ENCODE measurements at regions of chr12 and their contacts with region 1.

Region 1: GRCh38 chr12:26028953-26029735 is 70.7 kb downstream of the RASSF8 start:
- DNase-seq: no peak
- H3K4me3 ChIP-seq: no peak overlapping the region
- H3K27ac ChIP-seq: peak overlapping the region in 1 of 4 donors; percentile 19
- H3K4me1 ChIP-seq: peaks cover 0 to 25% (median 0%) of the 10 kb centered on the region in 3 donors
- H3K27me3 ChIP-seq: no peaks in the 10 kb centered on the region
- CTCF ChIP-seq: peak; percentile 23 to 83 (median 69)
- POLR2A ChIP-seq: no peak

Region 2: DNA sequence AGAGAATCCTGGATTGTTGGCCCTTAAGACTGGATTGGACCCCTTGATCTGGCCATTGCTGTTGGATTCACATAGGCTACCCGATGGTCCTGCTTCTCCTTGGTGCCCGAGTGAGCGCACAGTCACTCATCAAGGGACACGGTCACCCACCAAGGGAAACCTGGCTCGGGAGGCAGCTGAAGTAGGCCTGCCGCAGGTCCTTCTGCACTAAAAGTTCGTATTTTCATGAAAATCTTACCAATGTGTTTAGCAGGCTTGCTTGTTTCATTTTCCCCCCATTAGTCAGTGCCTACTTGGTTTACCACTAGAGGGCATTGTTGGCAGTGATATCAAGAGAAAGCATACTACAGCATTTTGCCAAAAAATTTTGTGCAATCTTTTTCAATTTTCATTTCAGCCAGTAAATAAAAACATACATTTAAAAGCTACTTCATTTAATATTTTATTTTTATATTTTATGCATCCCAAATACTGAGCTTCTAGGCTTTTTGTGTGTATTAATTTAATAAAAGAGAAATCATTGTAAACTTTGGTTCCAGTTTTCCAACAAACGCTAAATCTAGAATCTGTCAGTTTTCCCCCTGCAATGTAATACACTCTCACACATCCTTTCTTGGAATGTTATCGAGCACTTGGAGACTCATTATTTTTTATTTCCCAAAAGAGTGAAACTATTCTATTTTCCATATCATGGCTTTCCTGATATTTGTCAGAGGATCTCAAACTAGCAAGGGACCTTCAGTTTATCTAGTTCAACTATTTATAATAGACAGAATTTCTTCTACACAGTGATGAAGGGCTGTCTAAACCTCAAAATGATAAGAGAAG is 592.7 kb before region 1 on chr12:
- intact Hi-C with region 1: loop called (anchors 10 kb)
- DNase-seq: no peak
- H3K4me3 ChIP-seq: peak overlapping the region in 3 of 4 donors; percentile 18 to 48 (median 21)
- H3K27ac ChIP-seq: no peak overlapping the region
- H3K4me1 ChIP-seq: peaks cover 0 to 7% (median 4%) of the 10 kb centered on the region in 3 donors
- H3K27me3 ChIP-seq: no peaks in the 10 kb centered on the region
- CTCF ChIP-seq: peak; percentile 57 to 87 (median 78)
- POLR2A ChIP-seq: no peak

Region 3: GRCh38 chr12:26113853-26114719 is 84.9 kb after region 1 on chr12:
- intact Hi-C with region 1: no loop called
- DNase-seq: peak; percentile 76
- H3K4me3 ChIP-seq: peak overlapping the region; percentile 38 to 73 (median 54)
- H3K27ac ChIP-seq: peak overlapping the region; percentile 84 to 96 (median 92)
- H3K4me1 ChIP-seq: peaks cover 4 to 24% (median 13%) of the 10 kb centered on the region in 3 donors
- H3K27me3 ChIP-seq: no peaks in the 10 kb centered on the region
- CTCF ChIP-seq: peak in 4 of 6 experiments; percentile 27 to 58 (median 44)
- POLR2A ChIP-seq: peak in 3 of 4 donors; percentile 66 to 90 (median 89)

Region 4: DNA sequence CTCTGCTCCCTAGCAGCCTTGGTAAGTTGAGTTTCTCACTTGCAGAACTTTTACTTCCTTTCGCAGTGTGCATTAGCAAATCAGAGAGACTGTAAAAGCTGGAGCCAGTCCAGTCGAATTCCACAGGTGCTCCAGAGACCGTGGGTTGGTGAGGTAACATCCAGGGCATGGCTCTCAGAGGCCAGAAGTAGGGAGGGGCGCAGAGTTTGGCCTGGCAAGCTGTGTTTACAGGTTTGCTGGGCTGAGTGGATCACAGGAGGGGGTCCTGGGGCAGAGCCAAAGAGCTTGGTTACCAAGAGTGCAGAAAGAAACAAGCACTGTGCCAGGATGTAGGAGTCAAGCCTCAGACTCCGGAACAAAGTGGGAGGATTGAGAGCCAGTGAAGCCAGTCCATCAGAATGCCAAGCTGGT is 105.9 kb after region 1 on chr12:
- intact Hi-C with region 1: no loop called
- DNase-seq: no peak
- H3K4me3 ChIP-seq: no peak overlapping the region
- H3K27ac ChIP-seq: no peak overlapping the region
- H3K4me1 ChIP-seq: peaks cover 0 to 8% (median 0%) of the 10 kb centered on the region in 3 donors
- H3K27me3 ChIP-seq: peaks cover 0 to 15% (median 0%) of the 10 kb centered on the region in 4 donors
- CTCF ChIP-seq: no peak
- POLR2A ChIP-seq: no peak

Measured in esophagus squamous epithelium (tissue), 5 donors.